ENCODE measurements at regions of chr2 and their contacts with region 1.

Region 1: DNA sequence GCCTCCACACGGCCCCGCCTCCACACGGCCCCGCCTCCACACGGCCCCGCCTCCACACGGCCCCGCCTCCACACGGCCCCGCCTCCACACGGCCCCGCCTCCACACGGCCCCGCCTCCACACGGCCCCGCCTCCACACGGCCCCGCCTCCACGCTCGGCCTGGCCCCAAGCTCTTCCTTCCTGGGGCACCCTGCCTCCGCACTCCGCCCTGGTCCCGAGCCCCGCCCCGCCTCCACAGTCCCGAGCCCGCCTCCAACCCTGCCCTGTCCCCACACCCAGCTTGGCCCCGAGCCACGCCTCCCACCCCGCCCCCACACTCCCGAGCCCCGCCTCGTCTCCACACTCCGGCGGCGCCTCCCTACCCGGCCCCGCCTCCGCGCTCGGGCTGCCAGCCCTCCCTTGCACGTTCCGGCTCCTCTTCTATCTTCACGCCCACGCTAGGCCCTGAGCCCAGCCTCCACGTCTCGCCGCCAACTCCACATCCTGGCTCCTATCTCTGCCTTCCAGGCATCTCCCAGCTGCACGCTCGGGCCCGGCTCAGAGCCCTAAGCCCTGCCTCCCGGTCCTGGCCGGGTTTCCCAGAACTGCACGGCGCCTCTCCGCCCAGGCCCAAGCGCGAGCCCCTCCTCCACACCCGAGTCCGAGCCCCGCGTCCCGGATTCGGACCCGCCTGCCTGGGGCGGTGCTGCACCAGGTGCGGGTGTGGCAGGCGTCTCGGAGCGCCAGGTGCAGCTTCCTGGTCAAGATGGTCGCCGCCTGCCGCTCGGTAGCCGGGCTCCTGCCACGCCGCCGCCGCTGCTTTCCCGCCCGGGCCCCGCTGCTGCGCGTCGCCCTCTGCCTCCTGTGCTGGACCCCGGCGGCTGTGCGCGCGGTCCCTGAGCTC is at the start of gene TMEM87B:
- DNase-seq: peak; percentile 98
- ATAC-seq: peak; percentile 64
- H3K4me3 ChIP-seq: peak within 1 kb of the TSS; percentile 87
- H3K27ac ChIP-seq: peak within 1 kb of the TSS; percentile 95
- H3K4me1 ChIP-seq: peaks cover 12% of the 10 kb centered on the region
- H3K27me3 ChIP-seq: no peaks in the 10 kb centered on the region
- CTCF ChIP-seq: no peak
- POLR2A ChIP-seq: peak; percentile 85
- RAD21 ChIP-seq: 0 out of 2 replicates have a peak, but pooled peaks have one; percentile 3
- total RNA-seq, gene TMEM87B: 6.3 and 16.9 TPM in 2 replicates

Region 2: DNA sequence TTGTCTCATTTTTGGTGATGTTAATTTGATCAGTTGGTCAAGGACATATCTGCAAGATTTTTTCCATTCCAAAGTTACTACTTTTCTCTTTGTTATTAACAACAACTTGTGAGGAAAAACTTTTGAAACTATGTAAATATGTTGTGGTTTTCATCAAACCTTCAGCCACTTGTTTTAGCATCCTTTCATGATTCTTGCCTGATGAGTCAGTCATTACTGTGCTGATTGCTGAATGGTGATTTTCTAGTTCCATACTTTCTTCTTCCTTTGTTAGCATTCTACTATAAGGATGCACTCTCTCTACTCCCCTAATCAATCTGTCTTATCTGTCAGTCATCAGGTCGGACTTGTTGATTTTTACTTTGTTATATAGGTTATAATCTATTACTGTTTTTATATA is 10.9 kb after region 1 on chr2:
- CTCF ChIA-PET with region 1: no interaction called
- POLR2A ChIA-PET with region 1: no interaction called
- dilution Hi-C with region 1: no loop called
- in situ Hi-C with region 1: no loop called
- intact Hi-C with region 1: loop called (anchors 1 kb)
- DNase-seq: peak; percentile 86
- ATAC-seq: peak; percentile 87
- H3K4me3 ChIP-seq: no peak overlapping the region
- H3K27ac ChIP-seq: peak overlapping the region; percentile 88; the same call in 1 of the 2 replicates
- H3K4me1 ChIP-seq: peaks cover 12% of the 10 kb centered on the region
- H3K27me3 ChIP-seq: no peaks in the 10 kb centered on the region
- CTCF ChIP-seq: no peak
- POLR2A ChIP-seq: no peak
- RAD21 ChIP-seq: no peak

Region 3: DNA sequence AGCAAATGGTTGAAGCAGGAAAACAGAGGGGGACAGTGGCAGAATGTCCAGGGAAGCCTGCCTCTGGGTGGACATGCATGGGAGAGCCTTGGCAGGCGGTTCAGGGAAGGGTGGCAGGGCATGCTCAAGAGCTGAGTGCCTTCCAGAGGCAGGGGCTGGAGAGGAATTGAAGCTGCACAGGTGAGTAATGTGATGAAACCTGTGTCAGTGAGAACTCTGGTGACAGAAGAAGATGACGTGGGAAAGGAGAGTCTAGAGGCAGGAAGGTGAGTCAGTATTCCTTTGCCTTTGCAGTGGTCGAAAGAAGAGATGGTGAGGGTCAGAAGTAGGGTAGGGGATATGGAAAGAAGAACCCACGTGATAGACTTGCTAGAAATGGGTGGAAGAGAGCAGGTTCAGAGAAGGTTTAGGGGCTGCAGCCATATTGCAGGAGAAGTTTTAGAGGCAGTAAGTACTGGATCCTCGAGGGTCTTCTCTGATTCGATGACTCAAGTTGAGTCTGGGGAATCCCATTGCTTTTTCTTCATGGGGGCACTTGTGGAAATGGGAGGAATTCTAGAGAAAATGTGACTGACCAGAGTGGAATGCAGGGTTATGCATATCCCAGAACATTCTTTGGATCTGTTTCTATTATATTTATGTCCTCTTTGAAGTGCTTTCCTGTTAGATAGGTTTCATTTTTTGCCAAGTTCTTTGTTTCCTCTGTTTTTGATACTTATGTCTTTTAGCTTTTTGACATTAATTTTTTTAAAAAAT is 37.4 kb after region 1 on chr2:
- CTCF ChIA-PET with region 1: interaction called, 6 read pairs
- POLR2A ChIA-PET with region 1: no interaction called
- dilution Hi-C with region 1: no loop called
- in situ Hi-C with region 1: no loop called
- intact Hi-C with region 1: loop called (anchors 1 kb)
- DNase-seq: peak; percentile 83
- ATAC-seq: peak; percentile 82
- H3K4me3 ChIP-seq: no peak overlapping the region
- H3K27ac ChIP-seq: peak overlapping the region; percentile 32; the same call in 1 of the 2 replicates
- H3K4me1 ChIP-seq: peaks cover 15% of the 10 kb centered on the region
- H3K27me3 ChIP-seq: no peaks in the 10 kb centered on the region
- CTCF ChIP-seq: no peak
- POLR2A ChIP-seq: no peak
- RAD21 ChIP-seq: no peak

Region 4: DNA sequence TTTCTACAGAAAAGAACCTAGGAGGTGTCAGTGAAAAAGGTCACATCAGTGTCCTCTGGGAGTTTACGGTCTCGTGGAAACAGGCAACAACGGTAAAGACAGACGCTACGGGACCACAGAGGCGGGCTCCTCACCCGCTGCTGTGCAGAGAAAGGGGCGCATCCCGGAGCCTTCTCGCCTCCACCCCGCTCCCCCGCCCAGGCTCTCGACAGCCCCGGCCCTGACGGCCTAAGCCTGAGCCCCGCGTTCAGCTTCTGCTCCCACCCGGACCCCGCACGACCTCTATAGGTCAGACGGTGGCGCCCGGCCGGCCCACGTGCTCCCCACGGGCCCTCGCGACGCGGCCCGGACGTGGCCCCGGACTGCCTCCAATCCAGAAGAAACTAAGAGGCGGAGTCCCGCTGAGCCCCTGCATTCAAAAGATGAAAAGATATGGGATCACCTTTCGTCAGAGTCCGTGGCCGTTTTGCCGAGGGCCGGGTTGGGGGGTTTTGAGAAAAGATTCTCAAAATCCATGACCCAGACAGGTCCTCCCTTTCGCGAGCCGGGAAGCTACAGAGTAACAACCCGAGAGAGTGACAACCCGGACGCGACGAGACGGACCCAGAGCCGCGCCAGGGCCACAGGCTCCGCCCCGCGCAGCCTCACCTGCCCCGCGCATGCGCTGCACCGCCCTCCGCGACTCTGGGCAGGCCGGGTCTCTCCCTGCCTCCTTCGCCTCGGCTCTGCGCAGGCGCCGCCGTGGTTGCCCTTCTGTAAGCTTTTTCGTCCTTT is 199.6 kb after region 1 on chr2 and contains the start of gene ZC3H8:
- CTCF ChIA-PET with region 1: no interaction called
- POLR2A ChIA-PET with region 1: interaction called, 3 read pairs
- dilution Hi-C with region 1: no loop called
- in situ Hi-C with region 1: no loop called
- intact Hi-C with region 1: loop called (anchors 5 kb)
- DNase-seq: peak; percentile 75
- ATAC-seq: peak; percentile 99
- H3K4me3 ChIP-seq: peak within 1 kb of the TSS; percentile 57
- H3K27ac ChIP-seq: peak within 1 kb of the TSS; percentile 15; the same call in 1 of the 2 replicates
- H3K4me1 ChIP-seq: no peaks in the 10 kb centered on the region
- H3K27me3 ChIP-seq: no peaks in the 10 kb centered on the region
- CTCF ChIP-seq: no peak
- POLR2A ChIP-seq: no peak; the same call in 1 of the 2 replicates
- RAD21 ChIP-seq: no peak
- total RNA-seq, gene ZC3H8: 0.18 and 1.7 TPM in 2 replicates

Region 5: GRCh38 chr2:112275306-112275886 is 220.3 kb after region 1 on chr2 and contains the start of gene ZC3H6:
- CTCF ChIA-PET with region 1: no interaction called
- POLR2A ChIA-PET with region 1: interaction called, 8 read pairs
- dilution Hi-C with region 1: no loop called
- in situ Hi-C with region 1: no loop called
- intact Hi-C with region 1: loop called (anchors 5 kb)
- DNase-seq: peak; percentile 98
- ATAC-seq: peak; percentile 96
- H3K4me3 ChIP-seq: peak within 1 kb of the TSS; percentile 86
- H3K27ac ChIP-seq: peak within 1 kb of the TSS; percentile 99
- H3K4me1 ChIP-seq: no peaks in the 10 kb centered on the region
- H3K27me3 ChIP-seq: no peaks in the 10 kb centered on the region
- CTCF ChIP-seq: peak; percentile 29; the same call in 1 of the 2 replicates
- POLR2A ChIP-seq: peak; percentile 92
- RAD21 ChIP-seq: 0 out of 2 replicates have a peak, but pooled peaks have one; percentile 13
- total RNA-seq, gene ZC3H6: 2.0 and 2.2 TPM in 2 replicates

Measured in IMR-90 (cell line).